ENCODE measurements at regions of chr2 and their contacts with region 1.

Region 1: GRCh38 chr2:179253226-179253625 is 11.4 kb downstream of the SESTD1 start:
- DNase-seq: no peak
- ATAC-seq: no peak
- H3K4me3 ChIP-seq: no peak overlapping the region
- H3K27ac ChIP-seq: no peak overlapping the region
- H3K4me1 ChIP-seq: peaks cover 92% of the 10 kb centered on the region
- H3K27me3 ChIP-seq: no peaks in the 10 kb centered on the region
- CTCF ChIP-seq: no peak
- EP300 ChIP-seq: no peak
- POLR2A ChIP-seq: no peak
- RAD21 ChIP-seq: no peak

Region 2: DNA sequence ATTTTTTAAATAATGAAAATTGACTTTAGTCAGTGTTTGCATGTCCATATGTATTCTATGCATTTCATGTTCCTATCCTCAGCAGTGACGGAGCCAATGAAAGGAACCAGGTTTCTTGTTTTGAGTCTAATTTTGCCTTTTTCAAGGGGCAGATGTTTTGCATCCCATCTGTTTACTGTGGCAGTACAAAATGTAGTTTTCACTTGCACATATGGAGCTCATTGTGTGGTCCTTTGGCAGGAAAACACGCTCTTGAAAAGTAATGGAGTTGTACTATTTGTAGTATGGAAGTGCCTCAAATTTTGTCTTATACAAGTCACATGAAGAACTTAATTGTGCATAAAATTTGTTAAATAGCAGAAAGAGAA is 1732.9 kb before region 1 on chr2:
- CTCF ChIA-PET with region 1: no interaction called
- POLR2A ChIA-PET with region 1: no interaction called
- in situ Hi-C with region 1: no loop called
- intact Hi-C with region 1: loop called (anchors 10 kb)
- DNase-seq: no peak
- ATAC-seq: no peak
- H3K4me3 ChIP-seq: no peak overlapping the region
- H3K27ac ChIP-seq: no peak overlapping the region
- H3K4me1 ChIP-seq: no peaks in the 10 kb centered on the region
- H3K27me3 ChIP-seq: no peaks in the 10 kb centered on the region
- CTCF ChIP-seq: no peak
- EP300 ChIP-seq: no peak
- POLR2A ChIP-seq: no peak
- RAD21 ChIP-seq: no peak

Region 3: DNA sequence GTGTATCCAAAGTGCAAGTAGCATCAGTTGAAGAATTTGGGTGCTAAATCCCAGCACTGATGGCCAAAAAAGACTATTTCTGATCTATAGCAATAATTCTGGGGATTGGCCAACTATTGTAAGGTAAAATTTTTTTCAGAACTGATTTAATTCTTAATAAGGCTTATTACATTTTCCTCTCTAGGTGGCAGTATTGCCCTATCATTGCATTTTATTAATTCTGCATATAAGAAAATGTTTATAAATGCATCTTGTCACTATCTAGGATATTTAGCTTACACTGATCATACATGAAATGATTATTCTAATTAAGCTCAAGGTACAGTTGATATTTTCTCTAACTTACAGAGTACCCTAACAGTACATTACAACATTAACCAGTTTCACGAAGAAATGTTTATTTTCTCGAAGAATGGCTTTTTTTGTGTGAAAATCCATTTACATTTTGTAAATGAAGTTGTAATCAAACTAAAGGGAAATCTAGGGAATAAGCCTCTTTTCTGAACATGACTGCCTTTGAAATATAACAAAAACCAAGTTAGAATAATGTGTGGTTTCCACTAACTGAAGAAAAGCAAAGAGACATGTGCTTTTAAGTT is 457.0 kb before region 1 on chr2:
- CTCF ChIA-PET with region 1: no interaction called
- POLR2A ChIA-PET with region 1: no interaction called
- in situ Hi-C with region 1: no loop called
- intact Hi-C with region 1: no loop called
- DNase-seq: peak; percentile 10
- ATAC-seq: no peak
- H3K4me3 ChIP-seq: no peak overlapping the region
- H3K27ac ChIP-seq: no peak overlapping the region
- H3K4me1 ChIP-seq: no peaks in the 10 kb centered on the region
- H3K27me3 ChIP-seq: peaks cover 0 to 23% of the 10 kb centered on the region in 2 experiments; a peak in 2 of 5 replicates
- CTCF ChIP-seq: peak; percentile 22; the same call in 1 of the 2 replicates
- EP300 ChIP-seq: no peak
- POLR2A ChIP-seq: no peak
- RAD21 ChIP-seq: no peak

Measured in HepG2 (cell line).